SK-N-SH (cell line): ENCODE measurements at regions of chr19 and their contacts with region 1.

Region 1: GRCh38 chr19:46283771-46284170 is 13.1 kb upstream of the HIF3A start:
- DNase-seq: no peak
- H3K4me3 ChIP-seq: no peak overlapping the region
- H3K27ac ChIP-seq: no peak overlapping the region
- H3K4me1 ChIP-seq: no peaks in the 10 kb centered on the region
- H3K27me3 ChIP-seq: no peaks in the 10 kb centered on the region; the same call in 1 of the 2 replicates
- CTCF ChIP-seq: no peak
- EP300 ChIP-seq: no peak
- RAD21 ChIP-seq: no peak

Region 2: GRCh38 chr19:46124638-46125115 is 159.1 kb before region 1 on chr19 and contains the start of gene IGFL3:
- CTCF ChIA-PET with region 1: no interaction called
- POLR2A ChIA-PET with region 1: no interaction called
- DNase-seq: no peak
- H3K4me3 ChIP-seq: no peak within 1 kb of the TSS
- H3K27ac ChIP-seq: no peak within 1 kb of the TSS
- H3K4me1 ChIP-seq: peaks cover 0 to 5% of the 10 kb centered on the region in 2 experiments; a peak in 1 of 4 replicates
- H3K27me3 ChIP-seq: no peaks in the 10 kb centered on the region
- CTCF ChIP-seq: no peak
- EP300 ChIP-seq: no peak
- RAD21 ChIP-seq: no peak
- polyA plus RNA-seq, gene IGFL3: not detected in 2 replicates

Region 3: GRCh38 chr19:46211201-46211881 is 72.4 kb before region 1 on chr19:
- CTCF ChIA-PET with region 1: no interaction called
- POLR2A ChIA-PET with region 1: no interaction called
- DNase-seq: no peak
- H3K4me3 ChIP-seq: no peak overlapping the region; a peak in 1 of 4 replicates
- H3K27ac ChIP-seq: no peak overlapping the region
- H3K4me1 ChIP-seq: peaks cover 0 to 13% of the 10 kb centered on the region in 2 experiments; a peak in 1 of 4 replicates
- H3K27me3 ChIP-seq: peaks cover 13% of the 10 kb centered on the region; the same call in 1 of the 2 replicates
- CTCF ChIP-seq: no peak
- EP300 ChIP-seq: no peak
- RAD21 ChIP-seq: no peak

Region 4: GRCh38 chr19:46265217-46265828 is 18.4 kb before region 1 on chr19:
- CTCF ChIA-PET with region 1: interaction called, 78 read pairs
- POLR2A ChIA-PET with region 1: no interaction called
- DNase-seq: peak; percentile 78
- H3K4me3 ChIP-seq: peak overlapping the region in 1 of 2 experiments; percentile 7; a peak in 1 of 4 replicates
- H3K27ac ChIP-seq: no peak overlapping the region
- H3K4me1 ChIP-seq: no peaks in the 10 kb centered on the region
- H3K27me3 ChIP-seq: peaks cover 30% of the 10 kb centered on the region
- CTCF ChIP-seq: peak; percentile 87
- EP300 ChIP-seq: no peak
- RAD21 ChIP-seq: peak; percentile 90

Region 5: DNA sequence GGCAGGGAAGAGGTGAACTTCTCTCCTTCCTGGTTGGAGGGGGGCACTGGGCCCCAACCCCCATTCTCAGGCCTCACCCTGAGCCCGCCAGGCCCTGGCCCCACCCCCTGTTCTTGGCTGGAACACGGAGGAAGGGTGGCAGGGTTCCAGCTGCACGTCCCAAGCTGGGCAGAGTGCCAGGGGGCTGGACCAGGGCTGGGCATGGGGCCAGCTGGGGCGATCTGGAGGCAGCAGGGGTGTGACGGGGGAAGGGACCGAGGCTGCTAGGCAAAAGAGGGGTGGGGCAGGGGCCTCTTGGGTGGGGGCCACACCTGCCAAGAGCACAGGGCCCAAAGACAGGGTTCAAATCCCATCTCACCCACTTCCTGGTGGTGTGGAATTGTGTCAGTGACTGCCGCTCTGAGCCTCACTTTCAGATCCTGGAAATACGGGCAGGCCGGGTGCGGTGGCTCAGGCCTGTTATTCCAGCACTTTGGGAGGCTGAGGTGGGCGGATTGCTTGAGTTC is 15.3 kb after region 1 on chr19:
- CTCF ChIA-PET with region 1: interaction called, 70 read pairs
- POLR2A ChIA-PET with region 1: no interaction called
- DNase-seq: peak; percentile 99
- H3K4me3 ChIP-seq: no peak overlapping the region
- H3K27ac ChIP-seq: peak overlapping the region in 1 of 2 experiments; percentile 29; a peak in 1 of 4 replicates
- H3K4me1 ChIP-seq: peaks cover 15 to 34% of the 10 kb centered on the region in 2 experiments
- H3K27me3 ChIP-seq: no peaks in the 10 kb centered on the region
- CTCF ChIP-seq: no peak
- EP300 ChIP-seq: peak; percentile 50 to 52; a peak in 2 of 4 replicates
- RAD21 ChIP-seq: no peak

Region 6: DNA sequence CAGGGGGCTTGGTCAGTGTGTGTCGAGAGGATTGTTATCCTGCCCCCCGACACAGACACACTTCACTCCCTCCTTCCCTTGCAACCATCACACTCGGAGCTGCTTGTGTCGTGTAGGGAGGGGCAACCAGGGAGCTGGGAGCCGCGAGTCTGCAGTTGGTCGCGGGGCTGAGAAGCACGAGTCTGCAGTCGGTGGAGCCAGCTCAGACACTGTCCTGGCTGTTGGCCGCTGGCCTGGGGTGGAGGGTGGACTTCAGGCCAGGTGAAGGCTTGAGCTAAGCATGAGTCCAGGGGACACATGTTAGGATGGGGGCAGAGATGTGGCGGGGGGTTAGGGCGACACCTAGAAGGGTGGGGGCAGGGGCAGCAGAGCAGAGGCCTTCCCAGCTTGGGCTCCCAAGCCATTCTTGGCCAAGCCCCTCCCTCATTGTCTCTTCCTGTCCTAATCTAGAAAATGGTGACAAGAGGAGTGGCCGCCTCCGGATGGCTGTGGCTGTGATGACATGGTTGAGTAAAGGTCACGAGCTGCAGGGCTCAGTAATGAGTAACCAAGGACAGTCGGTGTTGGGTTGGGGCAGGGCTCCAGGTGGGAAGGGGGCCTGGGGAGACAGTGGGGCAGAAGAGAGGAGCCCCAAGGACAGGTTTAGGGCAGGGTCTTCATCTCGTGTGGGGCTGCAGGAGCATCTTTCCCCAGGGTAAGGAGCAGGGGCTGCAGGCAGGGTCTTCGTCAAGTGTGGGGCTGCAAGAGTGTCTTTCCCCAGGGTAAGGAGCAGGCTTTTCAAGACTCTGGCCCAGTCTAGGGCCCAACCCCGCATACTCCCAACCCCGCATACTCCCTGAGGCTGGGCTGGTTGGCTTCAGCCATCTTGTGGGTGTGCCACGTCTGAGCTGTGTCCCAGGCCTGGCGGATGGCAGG is 71.7 kb after region 1 on chr19:
- CTCF ChIA-PET with region 1: interaction called, 15 read pairs
- POLR2A ChIA-PET with region 1: no interaction called
- DNase-seq: no peak
- H3K4me3 ChIP-seq: no peak overlapping the region
- H3K27ac ChIP-seq: no peak overlapping the region
- H3K4me1 ChIP-seq: peaks cover 15 to 21% of the 10 kb centered on the region in 2 experiments; a peak in 2 of 4 replicates
- H3K27me3 ChIP-seq: no peaks in the 10 kb centered on the region
- CTCF ChIP-seq: no peak
- EP300 ChIP-seq: no peak
- RAD21 ChIP-seq: no peak

Region 7: DNA sequence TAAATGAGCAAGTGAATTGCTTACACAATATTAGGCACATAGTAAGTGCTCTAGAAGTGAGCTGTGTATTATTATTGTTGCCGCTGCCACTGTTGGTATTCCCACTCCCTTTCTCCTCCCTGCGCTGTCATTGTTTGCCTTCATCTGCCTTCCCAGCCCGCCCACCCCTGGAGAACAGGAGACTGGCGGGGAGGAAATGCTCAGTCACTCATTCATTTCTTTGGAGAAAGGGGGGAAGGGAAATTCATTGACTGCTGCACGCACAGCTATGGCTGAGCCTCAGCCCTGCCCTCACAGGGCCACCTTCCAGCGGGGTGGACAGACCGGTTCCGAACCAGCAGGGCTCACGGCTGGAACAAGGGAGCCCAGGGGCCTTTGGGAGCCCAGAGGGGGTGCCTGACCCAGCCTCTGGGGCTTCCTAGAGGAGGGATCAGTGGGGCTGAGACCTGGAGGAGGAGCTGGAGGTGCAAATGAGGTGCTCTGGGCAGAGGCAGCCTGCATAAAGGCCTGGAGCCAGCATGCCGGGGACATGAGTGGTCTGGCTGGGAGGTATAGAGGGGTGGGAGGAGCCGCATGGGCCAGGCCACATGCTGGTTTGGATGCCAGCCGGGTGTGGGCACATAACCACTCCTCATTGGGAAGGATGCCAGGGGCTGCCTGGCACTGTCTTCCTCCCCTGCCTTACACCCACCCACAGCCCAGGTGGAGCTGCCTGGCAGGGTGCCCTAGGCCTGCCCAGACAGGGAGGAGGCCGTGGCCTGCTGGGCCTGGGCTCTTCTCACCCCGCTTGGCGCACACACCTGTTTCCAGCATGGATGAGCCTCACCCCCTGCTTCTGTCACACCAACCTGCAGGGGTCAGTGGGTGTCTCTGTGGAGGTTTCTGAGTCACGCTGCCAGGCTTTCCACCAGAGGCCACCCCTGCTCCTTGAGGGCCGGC is 89.9 kb after region 1 on chr19:
- CTCF ChIA-PET with region 1: interaction called, 14 read pairs
- POLR2A ChIA-PET with region 1: no interaction called
- DNase-seq: peak; percentile 80
- H3K4me3 ChIP-seq: no peak overlapping the region
- H3K27ac ChIP-seq: peak overlapping the region; percentile 63 to 67
- H3K4me1 ChIP-seq: peaks cover 30 to 46% of the 10 kb centered on the region in 2 experiments
- H3K27me3 ChIP-seq: no peaks in the 10 kb centered on the region
- CTCF ChIP-seq: no peak
- EP300 ChIP-seq: peak in 1 of 2 experiments; percentile 39; a peak in 1 of 4 replicates
- RAD21 ChIP-seq: no peak

Region 8: DNA sequence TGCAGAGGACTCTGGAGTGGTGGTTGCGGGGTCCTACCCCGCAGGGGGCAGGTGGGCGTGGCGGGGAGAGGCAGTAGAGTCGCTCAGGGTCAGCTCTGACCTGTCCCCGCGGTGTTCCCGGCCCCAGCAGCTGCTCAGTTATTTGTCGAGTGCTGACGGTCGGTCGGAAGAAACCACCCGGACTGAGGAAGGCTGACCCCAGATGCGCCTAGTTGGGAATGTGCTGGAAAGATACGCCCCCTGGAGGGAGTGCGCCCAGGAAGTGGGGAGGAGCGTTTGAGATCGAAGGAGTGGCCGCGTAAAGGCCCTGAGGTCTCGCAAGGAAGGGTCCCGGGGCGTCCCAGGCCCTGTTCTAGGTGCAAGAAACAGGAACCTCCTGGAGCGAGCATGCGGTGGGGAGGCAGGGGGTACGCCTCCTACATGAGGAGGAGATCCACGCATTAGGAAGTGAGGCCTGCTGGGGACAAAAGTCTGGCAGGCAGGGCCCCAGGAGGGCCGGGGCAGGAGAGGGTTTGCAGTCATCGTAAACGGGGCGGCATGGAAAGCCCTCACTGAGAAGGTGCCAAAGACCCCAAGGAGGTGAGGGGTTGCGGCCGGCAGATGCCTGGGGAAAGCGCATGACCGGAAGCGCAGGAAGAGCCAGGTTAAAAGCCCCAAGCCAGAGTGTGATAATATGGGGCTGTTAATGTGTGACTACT is 120.4 kb after region 1 on chr19:
- CTCF ChIA-PET with region 1: interaction called, 13 read pairs
- POLR2A ChIA-PET with region 1: no interaction called
- DNase-seq: no peak
- H3K4me3 ChIP-seq: no peak overlapping the region
- H3K27ac ChIP-seq: no peak overlapping the region
- H3K4me1 ChIP-seq: no peaks in the 10 kb centered on the region
- H3K27me3 ChIP-seq: no peaks in the 10 kb centered on the region
- CTCF ChIP-seq: no peak
- EP300 ChIP-seq: no peak
- RAD21 ChIP-seq: no peak

Region 9: GRCh38 chr19:46442808-46443450 is 159.2 kb after region 1 on chr19:
- CTCF ChIA-PET with region 1: no interaction called
- POLR2A ChIA-PET with region 1: no interaction called
- DNase-seq: no peak
- H3K4me3 ChIP-seq: no peak overlapping the region
- H3K27ac ChIP-seq: peak overlapping the region in 1 of 2 experiments; percentile 45; a peak in 2 of 4 replicates
- H3K4me1 ChIP-seq: 0 out of 4 replicates have a peak, but pooled peaks cover 0 to 5% of the 10 kb centered on the region in 2 experiments
- H3K27me3 ChIP-seq: no peaks in the 10 kb centered on the region
- CTCF ChIP-seq: no peak
- EP300 ChIP-seq: 0 out of 4 replicates have a peak, but pooled peaks of 1 of the 2 experiments have one; percentile 23
- RAD21 ChIP-seq: no peak